GM10248 (cell line): ENCODE measurements at regions of chr11 and their contacts with region 1.

Region 1: DNA sequence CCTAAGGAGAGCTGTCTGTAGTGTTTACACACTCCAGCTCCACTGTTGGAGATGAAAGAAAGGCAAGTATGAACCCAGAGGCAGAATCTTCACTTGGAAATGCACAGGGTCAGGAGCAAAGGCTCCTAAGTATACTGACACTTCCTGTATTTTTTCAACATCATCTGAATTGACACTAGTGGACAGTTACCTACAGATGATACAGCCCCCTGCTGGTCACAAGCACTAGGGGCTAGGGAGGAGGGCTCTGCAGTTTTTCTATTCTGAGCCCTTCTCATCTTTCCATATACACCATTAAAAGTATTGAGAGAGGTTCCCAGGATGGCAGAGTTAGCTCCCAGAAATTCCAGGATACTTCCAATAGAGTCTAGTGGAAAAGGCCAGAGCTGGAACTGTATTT is 290.3 kb upstream of the API5 start:
- DNase-seq: peak; percentile 12
- CTCF ChIP-seq: no peak

Region 2: DNA sequence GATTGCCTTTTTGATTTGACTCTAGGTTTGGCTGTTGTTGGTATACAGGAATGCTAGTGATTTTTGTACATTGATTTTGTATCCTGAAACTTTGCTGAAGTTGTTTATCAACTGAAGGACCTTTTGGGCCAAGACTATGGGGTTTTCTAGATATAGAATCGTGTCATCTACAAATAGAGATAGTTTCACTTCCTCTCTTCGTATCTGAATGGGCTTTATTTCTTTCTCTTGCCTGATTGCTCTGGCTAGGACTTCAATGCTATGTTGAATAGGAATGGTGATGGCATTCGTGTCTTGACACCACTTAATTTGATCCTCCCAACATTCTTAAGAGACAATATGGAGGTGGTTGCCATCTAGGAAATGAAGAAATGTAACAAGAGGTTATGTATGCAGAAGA is 97.8 kb before region 1 on chr11:
- CTCF ChIA-PET with region 1: no interaction called
- POLR2A ChIA-PET with region 1: no interaction called
- DNase-seq: no peak
- CTCF ChIP-seq: no peak

Region 3: GRCh38 chr11:43035086-43035485 is 13.6 kb after region 1 on chr11:
- CTCF ChIA-PET with region 1: interaction called, 10 read pairs
- POLR2A ChIA-PET with region 1: no interaction called
- DNase-seq: no peak
- CTCF ChIP-seq: no peak